PC-3 (cell line): ENCODE measurements at regions of chr22 and their contacts with region 1.

Region 1: GRCh38 chr22:17638432-17639246 is at the start of gene BCL2L13:
- DNase-seq: peak; percentile 86
- ATAC-seq: peak; percentile 86
- H3K4me3 ChIP-seq: peak within 1 kb of the TSS; percentile 91
- H3K27ac ChIP-seq: peak within 1 kb of the TSS; percentile 93
- H3K4me1 ChIP-seq: peaks cover 22% of the 10 kb centered on the region
- H3K27me3 ChIP-seq: no peaks in the 10 kb centered on the region
- CTCF ChIP-seq: no peak
- total RNA-seq, gene BCL2L13: 31.3 TPM in 2 replicates

Region 2: DNA sequence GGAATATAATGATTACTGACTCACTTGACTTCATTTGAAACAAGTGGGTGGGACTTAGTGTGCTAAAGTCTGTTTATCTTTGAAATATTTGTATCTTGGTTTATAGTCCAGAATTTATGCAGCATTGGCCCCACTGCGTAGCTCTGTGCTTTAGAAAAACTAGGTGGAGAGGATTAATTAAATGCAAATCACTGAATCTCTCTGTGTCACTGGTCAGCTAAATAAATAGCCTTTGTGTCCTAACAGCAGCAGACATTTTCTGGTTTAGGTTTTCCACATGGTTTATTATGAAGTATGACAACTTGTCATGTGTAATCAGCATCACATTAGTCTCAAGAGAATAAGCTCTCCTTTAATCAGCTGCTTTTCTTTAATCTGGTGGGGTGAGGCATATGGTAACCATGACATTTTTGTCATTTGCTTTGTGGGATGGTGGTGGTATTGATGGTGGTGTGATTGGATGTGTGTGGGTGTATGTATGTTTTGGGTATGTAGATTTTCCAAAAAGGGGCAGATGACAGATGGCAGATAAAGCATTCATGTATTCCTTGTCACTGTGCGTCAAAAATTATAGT is 33.9 kb after region 1 on chr22:
- CTCF ChIA-PET with region 1: no interaction called
- POLR2A ChIA-PET with region 1: no interaction called
- intact Hi-C with region 1: loop called (anchors 2 kb)
- DNase-seq: peak; percentile 2
- ATAC-seq: peak; percentile 34
- H3K4me3 ChIP-seq: no peak overlapping the region
- H3K27ac ChIP-seq: peak overlapping the region; percentile 69
- H3K4me1 ChIP-seq: peaks cover 18% of the 10 kb centered on the region
- H3K27me3 ChIP-seq: no peaks in the 10 kb centered on the region
- CTCF ChIP-seq: no peak

Region 3: DNA sequence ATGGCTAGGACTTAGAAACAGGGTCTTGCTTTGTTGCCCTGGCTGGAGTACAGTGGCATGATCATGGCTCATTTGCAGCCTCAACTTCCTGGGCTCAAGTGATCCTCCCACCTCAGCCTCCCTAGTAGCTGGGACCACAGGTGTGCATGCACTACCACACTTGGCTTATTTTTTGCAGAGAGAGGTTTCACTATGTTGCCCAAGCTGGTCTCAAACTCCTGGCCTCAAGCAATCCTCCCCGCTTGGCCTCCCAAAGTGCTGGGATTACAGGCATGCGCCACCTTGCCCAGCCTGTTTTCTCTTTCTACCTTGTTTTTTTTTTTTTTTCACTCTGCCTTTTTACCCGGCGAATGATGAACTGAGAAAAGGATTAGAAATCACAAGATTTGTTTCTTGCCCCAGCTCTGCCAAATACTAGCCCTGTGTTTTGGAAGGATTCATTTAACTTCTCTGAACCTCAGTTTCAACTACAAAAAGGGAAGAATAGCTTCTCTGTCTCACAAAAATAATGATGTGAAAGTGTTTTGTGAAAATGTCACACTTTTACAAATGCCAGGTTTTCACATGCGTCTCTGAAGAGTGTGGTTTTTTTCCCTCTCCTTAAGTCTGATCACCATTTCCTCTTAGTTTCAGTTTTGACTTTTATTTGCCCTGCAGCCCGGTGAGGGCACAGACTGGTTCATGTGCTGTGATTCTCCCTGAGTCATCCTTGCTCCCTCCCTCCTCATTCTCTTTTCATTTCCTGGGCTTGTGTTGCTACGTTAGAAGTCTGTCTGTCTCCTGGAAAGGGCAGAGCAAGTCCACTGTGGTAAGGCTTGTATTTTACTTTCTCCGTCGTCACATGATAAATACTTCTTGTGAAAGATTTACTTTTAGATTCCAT is 67.6 kb after region 1 on chr22:
- CTCF ChIA-PET with region 1: no interaction called
- POLR2A ChIA-PET with region 1: no interaction called
- intact Hi-C with region 1: loop called (anchors 2 kb)
- DNase-seq: peak; percentile 83
- ATAC-seq: peak; percentile 99
- H3K4me3 ChIP-seq: peak overlapping the region; percentile 60
- H3K27ac ChIP-seq: peak overlapping the region; percentile 91
- H3K4me1 ChIP-seq: peaks cover 28% of the 10 kb centered on the region
- H3K27me3 ChIP-seq: no peaks in the 10 kb centered on the region
- CTCF ChIP-seq: no peak

Region 4: DNA sequence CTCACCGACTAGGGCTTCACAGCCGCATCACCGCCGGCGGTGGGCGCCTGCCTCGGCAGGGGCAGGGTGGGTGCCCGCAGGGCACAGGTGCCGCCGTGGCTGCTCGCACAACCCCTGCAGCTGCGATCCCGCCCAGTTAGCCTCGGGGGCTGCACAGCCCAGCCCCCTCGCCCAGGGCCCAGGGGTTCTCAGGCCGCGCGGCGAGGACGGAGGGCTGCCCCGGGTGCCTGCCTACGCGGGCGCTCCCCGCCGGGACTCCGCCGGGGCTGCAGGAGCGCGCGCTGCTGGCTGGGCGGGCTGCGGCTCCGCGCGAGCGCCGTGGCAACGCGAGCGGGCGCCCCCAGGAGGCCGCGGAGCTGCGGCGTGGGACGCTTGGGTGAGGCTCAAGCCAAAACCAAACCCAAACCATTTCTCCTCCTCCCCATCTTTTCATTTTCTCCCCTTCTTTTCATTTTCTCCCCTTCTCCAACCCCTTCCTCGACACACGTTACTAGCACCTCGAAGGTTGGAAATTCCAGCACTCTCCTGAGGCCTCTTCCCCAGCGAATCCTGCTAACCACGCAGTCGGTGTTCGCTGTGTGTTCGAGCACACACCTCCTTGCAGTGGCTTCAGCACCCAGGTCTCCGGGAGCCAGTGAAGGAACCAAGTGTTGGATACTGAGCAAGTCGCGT is 385.8 kb after region 1 on chr22 and contains the start of gene MICAL3:
- CTCF ChIA-PET with region 1: no interaction called
- POLR2A ChIA-PET with region 1: interaction called, 15 read pairs
- intact Hi-C with region 1: no loop called
- DNase-seq: peak; percentile 74
- ATAC-seq: peak; percentile 87
- H3K4me3 ChIP-seq: peak within 1 kb of the TSS; percentile 81
- H3K27ac ChIP-seq: peak within 1 kb of the TSS; percentile 33
- H3K4me1 ChIP-seq: peaks cover 8% of the 10 kb centered on the region
- H3K27me3 ChIP-seq: no peaks in the 10 kb centered on the region
- CTCF ChIP-seq: peak; percentile 51; the same call in 1 of the 2 replicates
- total RNA-seq, gene MICAL3: 23.7 and 27.8 TPM in 2 replicates